ENCODE measurements at regions of chr2 and their contacts with region 1.

Region 1: GRCh38 chr2:30026087-30027055 is 105.0 kb upstream of the ALK start:
- DNase-seq: peak; percentile 89
- H3K4me3 ChIP-seq: peak overlapping the region; percentile 21 to 30; a peak in 3 of 4 replicates
- H3K27ac ChIP-seq: peak overlapping the region in 1 of 2 experiments; percentile 92; a peak in 2 of 4 replicates
- H3K4me1 ChIP-seq: peaks cover 5 to 57% of the 10 kb centered on the region in 2 experiments; a peak in 3 of 4 replicates
- H3K27me3 ChIP-seq: 0 out of 2 replicates have a peak, but pooled peaks cover 4% of the 10 kb centered on the region
- CTCF ChIP-seq: peak; percentile 83
- EP300 ChIP-seq: peak in 1 of 2 experiments; percentile 89; a peak in 2 of 4 replicates
- RAD21 ChIP-seq: peak; percentile 95

Region 2: GRCh38 chr2:28958689-28959088 is 1067.7 kb before region 1 on chr2:
- CTCF ChIA-PET with region 1: interaction called, 13 read pairs
- POLR2A ChIA-PET with region 1: no interaction called
- DNase-seq: peak; percentile 87
- H3K4me3 ChIP-seq: no peak overlapping the region; a peak in 1 of 4 replicates
- H3K27ac ChIP-seq: peak overlapping the region in 1 of 2 experiments; percentile 26; a peak in 1 of 4 replicates
- H3K4me1 ChIP-seq: peaks cover 0 to 10% of the 10 kb centered on the region in 2 experiments; a peak in 1 of 4 replicates
- H3K27me3 ChIP-seq: no peaks in the 10 kb centered on the region
- CTCF ChIP-seq: peak; percentile 79
- EP300 ChIP-seq: 0 out of 4 replicates have a peak, but pooled peaks of 1 of the 2 experiments have one; percentile 18
- RAD21 ChIP-seq: peak; percentile 99

Region 3: GRCh38 chr2:29940706-29941105 is 85.7 kb before region 1 on chr2:
- CTCF ChIA-PET with region 1: interaction called, 17 read pairs
- POLR2A ChIA-PET with region 1: interaction called, 3 read pairs
- DNase-seq: no peak
- H3K4me3 ChIP-seq: no peak overlapping the region
- H3K27ac ChIP-seq: no peak overlapping the region
- H3K4me1 ChIP-seq: no peaks in the 10 kb centered on the region
- H3K27me3 ChIP-seq: peaks cover 7% of the 10 kb centered on the region
- CTCF ChIP-seq: no peak
- EP300 ChIP-seq: no peak
- RAD21 ChIP-seq: no peak

Region 4: GRCh38 chr2:29950481-29950880 is 75.9 kb before region 1 on chr2:
- CTCF ChIA-PET with region 1: interaction called, 23 read pairs
- POLR2A ChIA-PET with region 1: interaction called, 7 read pairs
- DNase-seq: no peak
- H3K4me3 ChIP-seq: no peak overlapping the region
- H3K27ac ChIP-seq: no peak overlapping the region
- H3K4me1 ChIP-seq: peaks cover 0 to 32% of the 10 kb centered on the region in 2 experiments; a peak in 2 of 4 replicates
- H3K27me3 ChIP-seq: no peaks in the 10 kb centered on the region
- CTCF ChIP-seq: no peak
- EP300 ChIP-seq: no peak
- RAD21 ChIP-seq: no peak

Region 5: DNA sequence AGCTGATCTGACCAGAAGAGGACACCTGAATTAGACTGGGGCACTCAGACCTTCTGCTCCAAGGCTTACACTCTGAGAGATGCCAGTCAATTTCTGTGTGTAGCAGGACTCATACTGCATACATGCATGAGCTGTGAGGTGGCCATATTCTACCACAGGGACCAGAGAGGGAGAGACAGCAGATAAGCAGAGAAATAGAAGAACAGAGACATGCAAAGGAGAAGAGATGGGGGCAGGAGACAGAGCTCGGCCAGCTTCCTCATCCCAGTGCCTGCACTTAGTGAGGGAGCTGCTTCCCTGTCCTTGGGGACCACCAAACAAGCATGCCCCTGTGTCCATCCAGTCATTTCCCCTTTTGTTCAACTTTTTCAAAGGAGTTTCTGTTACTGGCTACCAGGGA is 31.1 kb before region 1 on chr2:
- CTCF ChIA-PET with region 1: no interaction called
- POLR2A ChIA-PET with region 1: no interaction called
- DNase-seq: no peak
- H3K4me3 ChIP-seq: no peak overlapping the region
- H3K27ac ChIP-seq: no peak overlapping the region
- H3K4me1 ChIP-seq: no peaks in the 10 kb centered on the region
- H3K27me3 ChIP-seq: peaks cover 6% of the 10 kb centered on the region; the same call in 1 of the 2 replicates
- CTCF ChIP-seq: no peak
- EP300 ChIP-seq: no peak
- RAD21 ChIP-seq: no peak

Region 6: GRCh38 chr2:30037016-30037415 is 10.6 kb after region 1 on chr2:
- CTCF ChIA-PET with region 1: interaction called, 34 read pairs
- POLR2A ChIA-PET with region 1: no interaction called
- DNase-seq: no peak
- H3K4me3 ChIP-seq: no peak overlapping the region
- H3K27ac ChIP-seq: no peak overlapping the region
- H3K4me1 ChIP-seq: no peaks in the 10 kb centered on the region
- H3K27me3 ChIP-seq: peaks cover 8% of the 10 kb centered on the region; the same call in 1 of the 2 replicates
- CTCF ChIP-seq: no peak
- EP300 ChIP-seq: no peak
- RAD21 ChIP-seq: no peak

Region 7: GRCh38 chr2:30089171-30089570 is 62.8 kb after region 1 on chr2:
- CTCF ChIA-PET with region 1: no interaction called
- POLR2A ChIA-PET with region 1: no interaction called
- DNase-seq: no peak
- H3K4me3 ChIP-seq: no peak overlapping the region
- H3K27ac ChIP-seq: no peak overlapping the region
- H3K4me1 ChIP-seq: no peaks in the 10 kb centered on the region; a peak in 1 of 4 replicates
- H3K27me3 ChIP-seq: no peaks in the 10 kb centered on the region
- CTCF ChIP-seq: no peak
- EP300 ChIP-seq: no peak
- RAD21 ChIP-seq: no peak

Region 8: GRCh38 chr2:30106543-30106942 is 80.2 kb after region 1 on chr2:
- CTCF ChIA-PET with region 1: no interaction called
- POLR2A ChIA-PET with region 1: no interaction called
- DNase-seq: no peak
- H3K4me3 ChIP-seq: no peak overlapping the region
- H3K27ac ChIP-seq: peak overlapping the region in 1 of 2 experiments; percentile 42; a peak in 2 of 4 replicates
- H3K4me1 ChIP-seq: peaks cover 0 to 5% of the 10 kb centered on the region in 2 experiments; a peak in 1 of 4 replicates
- H3K27me3 ChIP-seq: no peaks in the 10 kb centered on the region
- CTCF ChIP-seq: no peak
- EP300 ChIP-seq: peak in 1 of 2 experiments; percentile 73; a peak in 1 of 4 replicates
- RAD21 ChIP-seq: no peak